Panc1 (cell line): ENCODE measurements at regions of chr5 and their contacts with region 1.

Region 1: DNA sequence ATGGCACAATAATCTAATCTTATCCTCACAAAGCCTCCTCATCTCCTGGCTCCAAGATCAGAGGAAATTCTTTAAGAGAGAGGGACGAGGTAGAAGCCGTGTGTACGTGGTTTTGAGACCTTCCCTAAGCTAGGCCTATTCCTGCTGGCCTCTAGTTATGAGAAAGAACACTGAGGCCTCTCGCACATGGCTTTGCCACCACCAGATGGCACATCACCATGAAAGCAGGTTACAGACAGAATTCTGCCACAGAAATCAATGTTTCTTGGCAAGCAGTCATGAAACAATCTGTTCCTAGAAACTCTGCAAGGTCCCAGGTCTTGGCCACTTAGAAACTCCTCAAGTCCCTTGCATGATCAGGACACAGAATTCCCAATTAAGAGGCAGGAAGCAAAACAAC is 268.2 kb upstream of the TAS2R1 start:
- DNase-seq: peak; percentile 5
- ATAC-seq: no peak
- H3K4me3 ChIP-seq: no peak overlapping the region
- H3K27ac ChIP-seq: no peak overlapping the region
- H3K4me1 ChIP-seq: no peaks in the 10 kb centered on the region
- H3K27me3 ChIP-seq: peaks cover 2% of the 10 kb centered on the region; the same call in 1 of the 2 replicates
- CTCF ChIP-seq: peak; percentile 57

Region 2: DNA sequence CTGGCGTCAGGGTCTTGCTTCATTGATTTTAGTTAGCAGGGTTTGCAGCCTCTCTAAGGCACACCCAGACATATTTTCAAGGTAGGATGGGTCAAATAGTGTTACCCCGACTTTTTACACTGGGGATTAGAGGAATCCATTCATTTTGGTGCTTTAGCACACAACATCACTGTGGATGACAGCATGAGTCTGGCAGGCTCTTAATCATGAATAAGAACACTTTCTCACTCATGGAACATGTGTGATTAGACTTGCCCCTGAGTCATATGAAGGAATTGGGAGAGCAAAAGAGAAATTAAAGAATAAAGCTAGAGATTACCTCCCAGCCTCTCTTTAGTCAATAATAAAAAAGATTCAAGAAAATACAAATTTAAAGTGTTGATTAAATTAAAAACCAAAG is 528.1 kb before region 1 on chr5:
- CTCF ChIA-PET with region 1: no interaction called
- POLR2A ChIA-PET with region 1: no interaction called
- in situ Hi-C with region 1: no loop called
- intact Hi-C with region 1: no loop called
- DNase-seq: no peak
- ATAC-seq: no peak
- H3K4me3 ChIP-seq: no peak overlapping the region
- H3K27ac ChIP-seq: no peak overlapping the region
- H3K4me1 ChIP-seq: no peaks in the 10 kb centered on the region
- H3K27me3 ChIP-seq: no peaks in the 10 kb centered on the region
- CTCF ChIP-seq: no peak

Region 3: GRCh38 chr5:10133830-10134229 is 235.5 kb after region 1 on chr5:
- CTCF ChIA-PET with region 1: interaction called, 13 read pairs
- POLR2A ChIA-PET with region 1: no interaction called
- in situ Hi-C with region 1: no loop called
- intact Hi-C with region 1: no loop called
- DNase-seq: no peak
- ATAC-seq: peak; percentile 42; the same call in 1 of the 2 replicates
- H3K4me3 ChIP-seq: no peak overlapping the region
- H3K27ac ChIP-seq: no peak overlapping the region
- H3K4me1 ChIP-seq: no peaks in the 10 kb centered on the region
- H3K27me3 ChIP-seq: no peaks in the 10 kb centered on the region
- CTCF ChIP-seq: no peak

Region 4: DNA sequence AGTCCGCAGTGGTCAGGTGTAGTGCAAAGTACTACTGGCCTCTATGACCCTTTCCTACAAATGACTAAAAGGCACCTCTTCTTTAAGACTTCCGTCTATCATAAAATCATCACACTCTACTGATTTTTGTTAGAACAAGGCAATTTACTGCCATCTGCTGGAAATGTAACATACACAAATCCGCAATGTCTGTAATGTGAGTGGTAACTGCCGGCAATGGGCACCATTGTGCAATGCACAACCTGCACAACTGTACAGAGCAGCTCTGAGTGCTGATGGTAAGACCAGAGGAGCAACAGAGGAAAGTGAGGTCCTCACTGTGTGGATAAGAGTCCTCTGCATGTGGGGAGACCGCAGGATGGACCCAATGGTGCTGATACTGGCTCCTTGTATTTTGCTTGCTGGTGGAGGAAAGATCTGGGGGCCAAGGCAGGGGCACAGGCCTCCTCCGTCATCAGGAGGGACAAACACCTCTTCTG is 247.6 kb after region 1 on chr5:
- CTCF ChIA-PET with region 1: no interaction called
- POLR2A ChIA-PET with region 1: no interaction called
- in situ Hi-C with region 1: no loop called
- intact Hi-C with region 1: loop called (anchors 2 kb)
- DNase-seq: peak; percentile 28
- ATAC-seq: peak; percentile 78
- H3K4me3 ChIP-seq: no peak overlapping the region
- H3K27ac ChIP-seq: no peak overlapping the region
- H3K4me1 ChIP-seq: no peaks in the 10 kb centered on the region
- H3K27me3 ChIP-seq: no peaks in the 10 kb centered on the region
- CTCF ChIP-seq: peak; percentile 66